Calu3 (cell line): ENCODE measurements at regions of chr12 and their contacts with region 1.

Region 1: GRCh38 chr12:56593909-56594621 is 36.1 kb downstream of the BAZ2A start:
- DNase-seq: peak; percentile 67
- H3K4me3 Mint-ChIP-seq: no peak overlapping the region
- H3K27ac Mint-ChIP-seq: peak overlapping the region; percentile 12
- H3K4me1 Mint-ChIP-seq: no peaks in the 10 kb centered on the region
- H3K27me3 Mint-ChIP-seq: no peaks in the 10 kb centered on the region
- CTCF ChIP-seq: peak; percentile 77

Region 2: GRCh38 chr12:56510786-56511185 is 83.3 kb before region 1 on chr12:
- CTCF ChIA-PET with region 1: interaction called, 3 read pairs
- intact Hi-C with region 1: loop called (anchors 5 kb)
- DNase-seq: no peak
- H3K4me3 Mint-ChIP-seq: no peak overlapping the region
- H3K27ac Mint-ChIP-seq: no peak overlapping the region
- H3K4me1 Mint-ChIP-seq: peaks cover 8% of the 10 kb centered on the region
- H3K27me3 Mint-ChIP-seq: peaks cover 24% of the 10 kb centered on the region
- CTCF ChIP-seq: no peak